ENCODE measurements at regions of chr20 and their contacts with region 1.

Region 1: GRCh38 chr20:8969100-8969707 is 99.7 kb upstream of the PLCB4 start:
- DNase-seq: no peak
- H3K4me3 ChIP-seq: no peak overlapping the region
- H3K27ac ChIP-seq: no peak overlapping the region
- H3K4me1 ChIP-seq: no peaks in the 10 kb centered on the region
- H3K27me3 ChIP-seq: no peaks in the 10 kb centered on the region
- CTCF ChIP-seq: no peak

Region 2: GRCh38 chr20:8812817-8813216 is 156.4 kb before region 1 on chr20:
- CTCF ChIA-PET with region 1: interaction called, 14 read pairs
- POLR2A ChIA-PET with region 1: no interaction called
- intact Hi-C with region 1: no loop called
- DNase-seq: peak; percentile 92
- H3K4me3 ChIP-seq: no peak overlapping the region
- H3K27ac ChIP-seq: no peak overlapping the region
- H3K4me1 ChIP-seq: peaks cover 17% of the 10 kb centered on the region
- H3K27me3 ChIP-seq: no peaks in the 10 kb centered on the region
- CTCF ChIP-seq: peak; percentile 18; the same call in 1 of the 2 replicates

Measured in A673 (cell line).